ENCODE measurements at regions of chr19 and their contacts with region 1.

Region 1: GRCh38 chr19:21396893-21397572 is at the start of gene ZNF493:
- DNase-seq: peak; percentile 87
- H3K4me3 Mint-ChIP-seq: peak within 1 kb of the TSS; percentile 97
- H3K27ac Mint-ChIP-seq: peak within 1 kb of the TSS; percentile 83
- H3K4me1 Mint-ChIP-seq: peaks cover 14% of the 10 kb centered on the region
- H3K27me3 Mint-ChIP-seq: no peaks in the 10 kb centered on the region
- total RNA-seq, gene ZNF493: 9.6 and 12.6 TPM in 2 replicates

Region 2: DNA sequence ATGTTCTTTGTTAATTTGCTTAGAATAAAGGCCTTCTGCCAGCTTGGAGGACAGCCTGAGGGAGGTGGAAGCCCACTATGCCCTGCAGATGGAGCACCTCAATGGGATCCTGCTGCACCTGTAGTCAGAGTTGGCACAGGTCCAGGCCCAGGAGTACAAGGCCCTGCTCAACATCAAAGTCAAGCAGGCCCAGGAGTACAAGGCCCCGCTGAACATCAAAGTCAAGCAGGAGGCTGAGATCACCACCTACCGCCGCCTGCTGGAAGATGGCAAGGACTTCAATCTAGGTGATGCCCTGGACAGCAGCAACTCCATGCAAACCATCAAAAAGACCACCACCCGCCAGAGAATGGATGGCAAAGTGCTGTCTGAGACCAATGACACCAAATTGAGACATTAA is 432.2 kb before region 1 on chr19:
- intact Hi-C with region 1: no loop called
- DNase-seq: no peak
- H3K4me3 Mint-ChIP-seq: no peak overlapping the region
- H3K27ac Mint-ChIP-seq: no peak overlapping the region
- H3K4me1 Mint-ChIP-seq: no peaks in the 10 kb centered on the region
- H3K27me3 Mint-ChIP-seq: no peaks in the 10 kb centered on the region

Region 3: DNA sequence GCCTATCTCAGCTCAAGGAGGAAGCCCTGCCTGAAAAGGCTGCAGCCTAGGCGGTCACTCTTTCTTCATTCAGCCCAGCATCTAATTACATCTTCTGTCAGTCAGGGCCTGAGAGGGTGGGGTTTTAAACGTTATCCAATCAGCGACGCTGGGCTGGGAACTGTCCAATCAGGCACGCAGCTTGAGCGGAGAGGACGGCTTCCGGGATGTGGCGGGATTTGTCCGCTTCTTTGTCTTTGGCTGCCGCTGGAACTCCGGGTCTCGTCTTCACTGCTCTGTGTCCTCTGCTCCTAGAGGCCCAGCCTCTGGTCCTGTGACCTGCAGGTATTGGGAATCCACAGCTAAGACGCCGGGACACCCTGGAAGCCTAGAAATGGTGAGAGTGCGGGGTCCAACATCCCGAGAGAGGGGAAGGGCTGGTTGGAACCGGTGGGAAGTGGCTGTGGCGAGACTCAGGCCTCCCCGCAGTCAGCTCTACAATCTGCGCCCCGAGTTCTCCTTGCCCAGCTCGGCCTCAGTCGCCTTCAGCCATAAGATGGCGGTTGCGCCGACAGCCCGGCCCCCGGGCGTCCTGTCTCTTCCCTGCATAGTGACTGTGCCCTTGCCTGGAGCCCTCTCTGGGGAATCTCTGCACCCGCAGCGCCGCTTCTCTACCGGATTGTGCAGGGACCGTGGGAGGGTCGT is 38.1 kb before region 1 on chr19 and contains the start of gene ZNF738:
- intact Hi-C with region 1: loop called (anchors 2 kb)
- DNase-seq: peak; percentile 77
- H3K4me3 Mint-ChIP-seq: peak within 1 kb of the TSS; percentile 100
- H3K27ac Mint-ChIP-seq: peak within 1 kb of the TSS; percentile 97
- H3K4me1 Mint-ChIP-seq: no peaks in the 10 kb centered on the region
- H3K27me3 Mint-ChIP-seq: no peaks in the 10 kb centered on the region
- total RNA-seq, gene ZNF738: 9.7 and 11.7 TPM in 2 replicates

Region 4: GRCh38 chr19:21568816-21569493 is 171.9 kb after region 1 on chr19:
- intact Hi-C with region 1: loop called (anchors 2 kb)
- DNase-seq: peak; percentile 75
- H3K4me3 Mint-ChIP-seq: peak overlapping the region; percentile 92
- H3K27ac Mint-ChIP-seq: peak overlapping the region; percentile 78
- H3K4me1 Mint-ChIP-seq: peaks cover 5% of the 10 kb centered on the region
- H3K27me3 Mint-ChIP-seq: no peaks in the 10 kb centered on the region

Region 5: GRCh38 chr19:21851596-21852345 is 454.7 kb after region 1 on chr19:
- intact Hi-C with region 1: loop called (anchors 2 kb)
- DNase-seq: peak; percentile 80
- H3K4me3 Mint-ChIP-seq: peak overlapping the region; percentile 90
- H3K27ac Mint-ChIP-seq: peak overlapping the region; percentile 87
- H3K4me1 Mint-ChIP-seq: peaks cover 21% of the 10 kb centered on the region
- H3K27me3 Mint-ChIP-seq: no peaks in the 10 kb centered on the region

Measured in activated T-helper 1 cell treated with anti-CD3 and anti-CD28 coated beads, Interleukin-12 subunit alpha, Interleukin-12 subunit beta, Interleukin-2, Interleukin-4 antibody, amounts not matched to agents 30 ng/mL and 10 ng/mL and 1 ng/mL, durations not matched to agents 14 hours and 24 hours and 36 hours (primary cell).